ENCODE measurements at regions of chr9 and their contacts with region 1.

Region 1: GRCh38 chr9:97921959-97922724 is at the start of gene TRMO:
- DNase-seq: peak; percentile 94 to 99 (median 96)
- ATAC-seq: peak; percentile 82
- H3K4me3 ChIP-seq: peak within 1 kb of the TSS; percentile 47
- H3K27ac ChIP-seq: peak within 1 kb of the TSS; percentile 96
- H3K4me1 ChIP-seq: peaks cover 5 to 25% of the 10 kb centered on the region in 2 experiments
- H3K27me3 ChIP-seq: no peaks in the 10 kb centered on the region
- CTCF ChIP-seq: peak; percentile 83 to 95 (median 87)
- EP300 ChIP-seq: peak; percentile 65
- POLR2A ChIP-seq: peak; percentile 98
- RAD21 ChIP-seq: peak; percentile 73 to 79
- polyA plus RNA-seq, gene TRMO: 5.6 to 12.8 TPM

Region 2: GRCh38 chr9:97908705-97909104 is 13.4 kb before region 1 on chr9:
- CTCF ChIA-PET with region 1: no interaction called
- POLR2A ChIA-PET with region 1: interaction called, 14 read pairs
- in situ Hi-C with region 1: no loop called
- intact Hi-C with region 1: no loop called
- DNase-seq: no peak
- ATAC-seq: no peak
- H3K4me3 ChIP-seq: no peak overlapping the region
- H3K27ac ChIP-seq: no peak overlapping the region
- H3K4me1 ChIP-seq: no peaks in the 10 kb centered on the region; a peak in 2 of 5 replicates
- H3K27me3 ChIP-seq: no peaks in the 10 kb centered on the region
- CTCF ChIP-seq: no peak
- EP300 ChIP-seq: no peak
- POLR2A ChIP-seq: no peak
- RAD21 ChIP-seq: no peak

Region 3: GRCh38 chr9:97982683-97983588 is 60.8 kb after region 1 on chr9 and contains the start of gene ANP32B:
- CTCF ChIA-PET with region 1: interaction called, 8 read pairs
- POLR2A ChIA-PET with region 1: interaction called, 61 read pairs
- in situ Hi-C with region 1: loop called (anchors 5 kb)
- intact Hi-C with region 1: loop called (anchors 1 kb)
- DNase-seq: peak; percentile 85 to 97 (median 89)
- ATAC-seq: peak; percentile 82
- H3K4me3 ChIP-seq: peak within 1 kb of the TSS; percentile 89
- H3K27ac ChIP-seq: peak within 1 kb of the TSS; percentile 99
- H3K4me1 ChIP-seq: peaks cover 33 to 52% of the 10 kb centered on the region in 2 experiments; a peak in 4 of 5 replicates
- H3K27me3 ChIP-seq: no peaks in the 10 kb centered on the region
- CTCF ChIP-seq: peak; percentile 69 to 96 (median 92)
- EP300 ChIP-seq: peak; percentile 66; the same call in 1 of the 2 replicates
- POLR2A ChIP-seq: peak; percentile 78
- RAD21 ChIP-seq: peak in 1 of 2 experiments; percentile 54; a peak in 3 of 4 replicates
- polyA plus RNA-seq, gene ANP32B: 87.2 to 141 TPM

Region 4: GRCh38 chr9:98034593-98035546 is 112.7 kb after region 1 on chr9:
- CTCF ChIA-PET with region 1: interaction called, 24 read pairs
- POLR2A ChIA-PET with region 1: interaction called, 10 read pairs
- in situ Hi-C with region 1: no loop called
- intact Hi-C with region 1: loop called (anchors 1 kb)
- DNase-seq: peak; percentile 83 to 92 (median 86)
- ATAC-seq: peak; percentile 97
- H3K4me3 ChIP-seq: no peak overlapping the region
- H3K27ac ChIP-seq: no peak overlapping the region; the same call in 2 of the 3 replicates
- H3K4me1 ChIP-seq: peaks cover 0 to 6% of the 10 kb centered on the region in 2 experiments; a peak in 4 of 5 replicates
- H3K27me3 ChIP-seq: no peaks in the 10 kb centered on the region
- CTCF ChIP-seq: peak; percentile 79 to 95 (median 81)
- EP300 ChIP-seq: no peak
- POLR2A ChIP-seq: no peak
- RAD21 ChIP-seq: peak; percentile 63 to 75

Region 5: GRCh38 chr9:98118640-98119601 is 196.8 kb after region 1 on chr9 and contains the start of gene TRIM14:
- CTCF ChIA-PET with region 1: no interaction called
- POLR2A ChIA-PET with region 1: no interaction called
- in situ Hi-C with region 1: no loop called
- intact Hi-C with region 1: loop called (anchors 1 kb)
- DNase-seq: peak; percentile 83 to 91 (median 88)
- ATAC-seq: peak; percentile 87
- H3K4me3 ChIP-seq: peak within 1 kb of the TSS; percentile 76
- H3K27ac ChIP-seq: peak within 1 kb of the TSS; percentile 67
- H3K4me1 ChIP-seq: peaks cover 14 to 22% of the 10 kb centered on the region in 2 experiments; a peak in 4 of 5 replicates
- H3K27me3 ChIP-seq: no peaks in the 10 kb centered on the region
- CTCF ChIP-seq: peak; percentile 7 to 49 (median 42); a peak in 5 of 6 replicates
- EP300 ChIP-seq: no peak
- POLR2A ChIP-seq: peak; percentile 67
- RAD21 ChIP-seq: peak in 1 of 2 experiments; percentile 65; a peak in 3 of 4 replicates
- polyA plus RNA-seq, gene TRIM14: 7.6 to 8.3 TPM

Region 6: GRCh38 chr9:98255578-98256296 is 333.6 kb after region 1 on chr9 and contains the start of gene TBC1D2:
- CTCF ChIA-PET with region 1: no interaction called
- POLR2A ChIA-PET with region 1: interaction called, 4 read pairs
- in situ Hi-C with region 1: loop called (anchors 25 kb)
- intact Hi-C with region 1: loop called (anchors 2 kb)
- DNase-seq: peak; percentile 95 to 97 (median 96)
- ATAC-seq: peak; percentile 92
- H3K4me3 ChIP-seq: peak within 1 kb of the TSS; percentile 73
- H3K27ac ChIP-seq: peak within 1 kb of the TSS; percentile 92
- H3K4me1 ChIP-seq: peaks cover 26 to 37% of the 10 kb centered on the region in 2 experiments; a peak in 4 of 5 replicates
- H3K27me3 ChIP-seq: no peaks in the 10 kb centered on the region
- CTCF ChIP-seq: peak in 2 of 3 experiments; percentile 22 to 39; a peak in 2 of 6 replicates
- EP300 ChIP-seq: no peak
- POLR2A ChIP-seq: peak; percentile 85
- RAD21 ChIP-seq: no peak
- polyA plus RNA-seq, gene TBC1D2: 0.10 to 0.21 TPM

Region 7: DNA sequence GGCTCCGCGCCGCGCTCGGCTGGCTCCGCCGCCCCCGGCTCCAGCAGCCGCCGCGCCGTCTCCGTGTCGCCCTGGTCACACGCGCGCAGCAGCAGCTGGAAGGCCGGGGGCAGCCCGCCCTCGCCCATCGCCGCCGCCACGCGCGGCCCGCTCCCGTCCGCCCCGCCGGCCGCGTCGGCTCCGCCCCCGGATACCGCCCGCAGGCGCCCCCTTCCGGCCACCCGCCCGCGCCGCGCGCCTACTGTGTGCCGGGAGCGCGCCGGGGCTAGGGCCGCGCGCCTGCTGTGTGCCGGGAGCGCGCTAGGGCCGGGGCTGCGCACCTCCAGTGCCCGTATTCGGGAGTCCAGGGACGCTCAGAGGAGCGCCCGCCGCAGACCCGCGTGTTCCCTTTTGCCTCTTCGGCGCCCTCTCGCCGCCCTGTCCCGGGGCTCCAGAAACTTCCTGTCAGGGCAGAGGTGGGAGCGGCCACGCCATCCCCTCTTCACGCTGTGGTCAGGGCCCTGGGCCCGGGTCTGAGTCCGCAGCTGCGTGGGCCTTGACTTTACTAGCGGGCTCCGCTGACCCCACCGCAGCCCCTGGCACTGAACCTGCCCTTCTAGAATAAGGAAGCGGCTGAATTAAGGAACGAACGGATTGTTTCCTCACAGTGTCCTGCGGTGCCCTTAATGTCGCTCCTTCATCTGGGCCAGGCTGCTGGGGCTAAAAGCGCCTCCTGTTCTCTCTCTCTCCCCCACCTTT is 874.4 kb after region 1 on chr9 and contains the start of gene ANKS6:
- CTCF ChIA-PET with region 1: interaction called, 3 read pairs
- POLR2A ChIA-PET with region 1: no interaction called
- in situ Hi-C with region 1: loop called (anchors 25 kb)
- intact Hi-C with region 1: no loop called
- DNase-seq: peak; percentile 89 to 95 (median 94)
- ATAC-seq: peak; percentile 87
- H3K4me3 ChIP-seq: peak within 1 kb of the TSS; percentile 66
- H3K27ac ChIP-seq: peak within 1 kb of the TSS; percentile 71
- H3K4me1 ChIP-seq: peaks cover 27 to 30% of the 10 kb centered on the region in 2 experiments; a peak in 4 of 5 replicates
- H3K27me3 ChIP-seq: no peaks in the 10 kb centered on the region
- CTCF ChIP-seq: peak; percentile 19 to 72 (median 59); a peak in 4 of 6 replicates
- EP300 ChIP-seq: no peak
- POLR2A ChIP-seq: peak; percentile 68
- RAD21 ChIP-seq: peak in 1 of 2 experiments; percentile 19; a peak in 2 of 4 replicates
- polyA plus RNA-seq, gene ANKS6: 9.9 to 11.8 TPM

Measured in K562 (cell line).